RWPE1 (cell line): ENCODE measurements at regions of chr2 and their contacts with region 1.

Region 1: DNA sequence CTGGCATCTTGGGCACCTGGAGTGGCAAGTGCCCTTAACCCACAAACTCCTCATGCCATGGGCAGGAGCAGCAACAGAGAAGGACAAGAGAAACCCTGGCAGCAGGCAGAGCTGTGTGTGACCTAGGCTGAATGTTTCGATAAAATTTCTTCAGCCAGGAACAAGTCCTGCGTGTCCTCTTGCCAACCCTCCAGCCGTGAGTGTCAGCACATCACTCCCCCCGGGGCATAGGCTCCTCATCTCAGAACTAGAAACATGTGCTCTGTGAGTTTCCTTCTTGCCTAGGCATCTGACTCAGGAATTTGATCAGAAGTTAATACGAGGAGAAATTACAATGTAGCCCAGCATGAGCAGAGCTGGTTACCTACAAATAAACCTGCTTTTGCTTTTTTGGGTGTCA is 2.2 kb downstream of the ABCG8 start:
- DNase-seq: no peak
- H3K27ac ChIP-seq: no peak overlapping the region
- CTCF ChIP-seq: no peak

Region 2: GRCh38 chr2:43812005-43812404 is 29.0 kb before region 1 on chr2:
- CTCF ChIA-PET with region 1: interaction called, 10 read pairs
- POLR2A ChIA-PET with region 1: no interaction called
- DNase-seq: no peak
- H3K27ac ChIP-seq: no peak overlapping the region
- CTCF ChIP-seq: no peak